Heart right ventricle (tissue), 16 donors: ENCODE measurements at regions of chr11 and their contacts with region 1.

Region 1: GRCh38 chr11:117817368-117818040 is 7.0 kb downstream of the FXYD2 start:
- DNase-seq: peak; percentile 82 to 83
- ATAC-seq: peak; percentile 58 to 78 (median 70)
- H3K4me3 ChIP-seq: peak overlapping the region in 3 of 10 donors; percentile 22 to 36 (median 34)
- H3K27ac ChIP-seq: peak overlapping the region in 7 of 10 donors; percentile 31 to 80 (median 65)
- H3K4me1 ChIP-seq: peaks cover 0 to 58% (median 27%) of the 10 kb centered on the region in 9 donors
- H3K27me3 ChIP-seq: no peaks in the 10 kb centered on the region
- CTCF ChIP-seq: peak; percentile 96 to 100 (median 99)

Region 2: GRCh38 chr11:117426269-117426685 is 391.2 kb before region 1 on chr11:
- intact Hi-C with region 1: loop called in 5 of 10 experiments (anchors 5 kb)
- DNase-seq: peak; percentile 51 to 76
- ATAC-seq: peak; percentile 27 to 74 (median 68)
- H3K4me3 ChIP-seq: no peak overlapping the region
- H3K27ac ChIP-seq: no peak overlapping the region
- H3K4me1 ChIP-seq: peaks cover 0 to 7% (median 0%) of the 10 kb centered on the region in 9 donors
- H3K27me3 ChIP-seq: peaks cover 0 to 4% (median 0%) of the 10 kb centered on the region in 7 donors
- CTCF ChIP-seq: peak; percentile 82 to 97 (median 95)

Region 3: DNA sequence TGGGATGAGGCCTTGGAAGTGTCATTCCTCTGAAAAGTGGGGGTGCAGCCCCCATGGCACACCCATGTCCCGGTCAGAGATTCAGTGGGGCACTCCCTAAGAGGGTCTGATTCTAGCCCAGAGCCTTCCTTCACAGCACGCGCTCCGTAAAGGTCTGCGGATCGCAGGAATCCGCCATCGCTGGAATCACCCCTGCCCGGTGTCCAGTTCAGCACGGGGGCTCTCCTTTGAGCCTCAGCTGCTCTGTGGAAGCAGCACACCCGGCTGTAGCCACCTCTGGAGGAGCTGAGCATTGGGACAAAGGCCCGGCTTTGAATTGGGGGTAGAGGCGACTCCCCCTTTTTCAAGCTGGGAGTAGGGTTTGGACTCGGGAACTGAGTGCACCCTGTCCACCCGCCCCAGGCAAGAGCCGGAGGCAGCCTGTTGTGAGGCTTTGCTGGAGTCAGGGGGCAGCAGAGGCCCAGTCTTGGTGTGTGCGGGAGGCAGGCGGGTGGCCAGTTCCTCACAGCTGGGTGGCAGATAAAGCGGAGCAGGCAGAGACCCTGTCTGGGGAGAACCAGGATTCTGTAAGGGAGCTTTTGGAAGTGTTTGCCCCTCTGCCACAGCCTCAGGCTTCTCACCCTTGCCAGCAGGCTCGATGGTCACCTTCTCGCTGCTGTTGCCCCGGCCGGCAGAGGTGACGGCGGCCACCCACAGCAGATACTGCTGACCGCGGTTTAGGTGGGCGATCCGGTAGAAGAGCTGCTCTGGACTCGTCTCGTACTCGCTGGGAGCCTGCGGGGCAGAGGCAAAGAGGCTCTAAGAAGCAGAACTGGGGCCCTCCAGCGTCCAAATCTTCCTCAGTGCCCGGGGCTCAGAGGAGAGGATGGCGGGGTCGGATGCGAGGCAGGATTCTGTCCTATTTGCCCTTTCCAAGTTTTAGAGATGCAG is 374.0 kb before region 1 on chr11:
- intact Hi-C with region 1: loop called in 2 of 10 experiments (anchors 5 kb)
- DNase-seq: peak; percentile 41 to 63
- ATAC-seq: peak; percentile 80 to 91 (median 88)
- H3K4me3 ChIP-seq: peak overlapping the region in 2 of 10 donors; percentile 14 to 17
- H3K27ac ChIP-seq: no peak overlapping the region
- H3K4me1 ChIP-seq: peaks cover 0 to 11% (median 0%) of the 10 kb centered on the region in 9 donors
- H3K27me3 ChIP-seq: peaks cover 0 to 20% (median 10%) of the 10 kb centered on the region in 7 donors
- CTCF ChIP-seq: peak in 7 of 9 donors; percentile 60 to 73 (median 68)

Region 4: DNA sequence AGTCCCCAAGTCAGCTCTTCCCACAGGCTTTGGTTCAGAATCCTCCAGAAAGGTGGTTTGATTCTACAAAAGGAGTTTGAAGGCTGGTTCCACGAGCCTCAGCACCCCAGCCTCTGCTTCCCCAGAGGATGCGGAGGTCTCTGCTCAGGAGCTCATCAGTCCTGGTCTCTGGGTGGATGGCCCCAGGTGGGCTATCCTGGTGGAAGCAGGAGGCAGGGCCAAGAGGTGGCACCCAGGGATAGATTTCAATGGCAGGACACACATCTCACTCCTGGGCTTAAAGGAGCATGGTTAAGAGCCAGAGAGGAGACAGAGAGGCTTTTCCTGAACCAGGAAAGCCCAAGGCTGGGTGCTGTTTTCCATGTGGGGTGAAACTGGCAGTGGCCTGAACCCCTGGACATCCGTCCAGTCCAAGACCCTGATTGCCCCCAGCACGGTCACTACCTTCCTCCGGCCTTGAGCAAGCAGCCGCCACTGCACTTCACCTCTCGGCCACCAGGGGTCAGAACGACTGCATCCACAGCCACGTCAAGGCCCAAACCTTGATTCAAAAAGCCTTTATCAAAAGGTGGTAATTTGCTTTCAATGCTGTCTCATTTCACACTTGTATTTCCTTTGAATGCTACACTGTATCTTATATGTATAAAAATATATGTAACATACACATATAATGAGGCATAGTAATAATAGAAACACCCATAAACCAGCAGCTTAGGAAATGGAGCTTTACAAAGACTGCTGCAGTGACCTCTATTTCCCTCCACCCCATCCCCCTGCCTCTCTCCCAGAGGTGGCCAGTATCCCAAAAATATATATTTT is 26.4 kb after region 1 on chr11:
- intact Hi-C with region 1: loop called in 1 of 10 experiments (anchors 2 kb)
- DNase-seq: peak; percentile 84 to 88
- ATAC-seq: peak; percentile 59 to 84 (median 76)
- H3K4me3 ChIP-seq: no peak overlapping the region
- H3K27ac ChIP-seq: peak overlapping the region in 3 of 10 donors; percentile 21 to 44 (median 30)
- H3K4me1 ChIP-seq: peaks cover 0 to 36% (median 24%) of the 10 kb centered on the region in 9 donors
- H3K27me3 ChIP-seq: no peaks in the 10 kb centered on the region
- CTCF ChIP-seq: peak; percentile 97 to 100 (median 99)

Region 5: GRCh38 chr11:117946842-117947526 is 129.5 kb after region 1 on chr11:
- intact Hi-C with region 1: loop called in 6 of 10 experiments (anchors 2 to 5 kb)
- DNase-seq: peak; percentile 91 to 92
- ATAC-seq: peak; percentile 91 to 98 (median 96)
- H3K4me3 ChIP-seq: no peak overlapping the region
- H3K27ac ChIP-seq: no peak overlapping the region
- H3K4me1 ChIP-seq: peaks cover 0 to 56% (median 24%) of the 10 kb centered on the region in 9 donors
- H3K27me3 ChIP-seq: peaks cover 0 to 8% (median 0%) of the 10 kb centered on the region in 7 donors
- CTCF ChIP-seq: peak; percentile 94 to 99 (median 98)

Region 6: DNA sequence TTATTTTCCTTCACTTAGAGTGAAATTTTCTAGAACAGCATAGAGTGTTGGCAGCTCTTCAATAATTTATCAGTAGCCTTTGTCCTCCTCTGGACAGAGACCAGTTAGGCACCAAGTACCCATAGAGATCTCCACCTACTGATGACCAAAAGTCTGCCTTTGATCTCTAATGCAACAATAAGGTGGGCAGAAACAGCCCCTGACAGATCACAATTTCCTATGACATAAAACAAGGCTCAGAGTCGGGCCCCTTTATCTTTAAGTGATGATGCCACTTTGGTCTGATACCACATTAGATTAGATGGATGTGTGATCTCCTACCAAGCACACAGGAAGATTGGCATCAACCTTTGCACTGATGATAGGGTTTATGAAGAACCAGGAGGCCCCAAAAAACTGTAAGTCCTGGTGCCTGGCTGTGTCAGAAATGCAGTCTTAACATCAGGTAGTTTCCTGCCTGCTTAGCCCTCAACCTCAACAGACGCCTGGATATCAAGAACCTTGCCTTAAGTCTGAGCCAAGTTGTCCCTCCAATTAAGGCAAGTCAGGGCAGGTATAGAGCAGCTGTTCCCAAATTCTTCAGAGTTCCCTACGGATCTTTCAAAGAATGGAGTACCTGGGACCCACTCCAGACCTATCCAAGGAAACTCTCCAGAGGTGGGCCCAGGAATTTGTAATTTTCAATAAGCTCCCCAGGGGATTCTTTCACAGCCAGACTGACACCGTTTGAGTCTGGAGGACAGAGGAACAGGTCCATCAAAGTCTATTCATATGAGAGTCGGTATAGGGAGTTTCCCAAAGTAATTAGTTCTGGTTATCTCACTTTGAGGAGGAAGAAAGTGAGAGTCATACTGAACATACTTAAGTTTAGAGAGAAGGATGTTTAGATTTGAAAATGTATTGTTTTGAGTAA is 228.8 kb after region 1 on chr11:
- intact Hi-C with region 1: loop called in 2 of 10 experiments (anchors 5 kb)
- DNase-seq: no peak
- ATAC-seq: no peak
- H3K4me3 ChIP-seq: no peak overlapping the region
- H3K27ac ChIP-seq: peak overlapping the region in 1 of 10 donors; percentile 68
- H3K4me1 ChIP-seq: peaks cover 0 to 13% (median 0%) of the 10 kb centered on the region in 9 donors
- H3K27me3 ChIP-seq: no peaks in the 10 kb centered on the region
- CTCF ChIP-seq: no peak

Region 7: DNA sequence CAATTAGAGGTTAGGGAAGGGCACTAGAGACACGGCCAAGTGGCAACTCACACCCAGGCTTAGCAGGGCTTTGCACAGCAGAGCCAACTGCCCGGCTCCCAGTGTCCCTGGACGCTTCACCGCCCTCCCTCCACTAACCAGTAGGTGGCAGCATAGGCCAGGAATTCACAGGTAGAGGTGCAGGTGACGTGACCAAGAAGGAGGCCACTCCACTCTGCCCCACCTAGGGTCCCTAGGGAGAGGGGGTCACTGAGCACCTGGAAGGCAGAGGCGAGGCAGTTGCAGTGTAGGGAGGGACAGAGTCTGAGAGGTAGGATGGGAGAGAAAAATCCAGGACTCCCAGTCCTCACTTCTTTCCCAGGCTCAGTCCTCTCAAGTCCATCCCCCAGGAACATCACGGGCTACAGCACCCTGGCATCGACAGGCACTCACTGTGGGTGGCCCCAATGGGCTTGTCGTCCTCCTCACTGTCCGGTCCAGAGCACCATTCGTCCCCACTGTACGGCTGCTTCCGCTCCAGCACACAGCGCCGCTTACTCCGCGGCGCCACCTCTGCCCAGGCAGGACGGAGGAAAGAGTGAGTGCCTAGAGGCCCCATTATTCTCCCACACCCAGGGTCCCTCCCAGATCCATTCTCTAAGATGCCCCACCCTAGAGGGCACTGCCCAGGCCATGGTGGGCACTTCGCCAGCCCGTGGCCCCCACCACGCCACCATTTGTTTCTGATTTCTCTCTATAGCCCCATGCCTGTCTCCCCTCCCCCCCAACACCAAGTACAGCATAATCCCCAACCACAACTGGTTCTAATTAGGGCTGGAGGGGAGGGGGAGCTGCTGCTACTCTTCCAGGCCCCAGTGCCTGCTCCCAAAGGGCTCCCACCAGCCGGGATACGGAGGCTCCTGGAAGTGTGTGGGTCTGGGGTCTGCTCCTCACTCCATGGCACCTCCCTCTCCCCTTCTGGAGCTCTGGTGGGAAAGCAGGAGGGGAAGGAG is 1089.8 kb after region 1 on chr11:
- intact Hi-C with region 1: no loop called
- DNase-seq: peak; percentile 81 to 89
- ATAC-seq: peak; percentile 34 to 70 (median 57)
- H3K4me3 ChIP-seq: no peak overlapping the region
- H3K27ac ChIP-seq: peak overlapping the region in 9 of 10 donors; percentile 20 to 98 (median 95)
- H3K4me1 ChIP-seq: peaks cover 33 to 67% (median 57%) of the 10 kb centered on the region in 9 donors
- H3K27me3 ChIP-seq: no peaks in the 10 kb centered on the region
- CTCF ChIP-seq: peak; percentile 73 to 96 (median 93)